ENCODE measurements at regions of chr15 and their contacts with region 1.

Region 1: GRCh38 chr15:44711356-44712107 is at the start of gene B2M:
- DNase-seq: peak; percentile 97 to 98
- ATAC-seq: peak; percentile 67 to 87 (median 75)
- H3K4me3 ChIP-seq: peak within 1 kb of the TSS; percentile 99
- H3K4me3 Mint-ChIP-seq: peak within 1 kb of the TSS; percentile 100
- H3K27ac ChIP-seq: peak within 1 kb of the TSS; percentile 95
- H3K27ac Mint-ChIP-seq: peak within 1 kb of the TSS; percentile 92 to 100
- H3K4me1 ChIP-seq: peaks cover 32% of the 10 kb centered on the region
- H3K4me1 Mint-ChIP-seq: peaks cover 77 to 78% of the 10 kb centered on the region in 2 donors
- H3K27me3 ChIP-seq: no peaks in the 10 kb centered on the region
- H3K27me3 Mint-ChIP-seq: no peaks in the 10 kb centered on the region
- CTCF ChIP-seq: no peak
- total RNA-seq, gene B2M: 7,484 to 8,893 (median 7,665) TPM

Region 2: DNA sequence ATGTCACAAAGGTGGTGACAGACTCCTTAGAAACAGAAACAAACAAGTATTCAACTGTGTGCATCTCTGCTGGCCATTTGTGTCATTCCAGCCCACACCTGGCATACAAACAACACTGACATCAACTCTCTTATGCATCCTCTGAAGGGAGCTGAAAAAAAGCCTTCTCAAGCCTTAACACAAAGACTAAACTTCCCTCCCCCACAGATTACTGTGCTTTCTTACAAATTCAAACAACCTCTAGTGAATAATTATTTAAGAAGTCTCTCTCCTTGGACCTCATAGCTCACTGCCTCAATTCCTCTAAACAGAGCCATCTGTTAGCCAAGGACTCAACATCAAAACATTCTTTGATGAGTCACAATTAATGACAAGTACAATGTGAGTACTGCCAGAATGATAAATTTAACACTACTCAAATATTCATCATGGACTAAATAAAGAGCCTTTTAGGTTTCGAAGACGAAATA is 752.6 kb before region 1 on chr15:
- intact Hi-C with region 1: no loop called
- DNase-seq: no peak
- ATAC-seq: no peak
- H3K4me3 ChIP-seq: no peak overlapping the region
- H3K4me3 Mint-ChIP-seq: no peak overlapping the region
- H3K27ac ChIP-seq: no peak overlapping the region
- H3K27ac Mint-ChIP-seq: no peak overlapping the region
- H3K4me1 ChIP-seq: no peaks in the 10 kb centered on the region
- H3K4me1 Mint-ChIP-seq: no peaks in the 10 kb centered on the region
- H3K27me3 ChIP-seq: peaks cover 2% of the 10 kb centered on the region
- H3K27me3 Mint-ChIP-seq: peaks cover 12 to 19% of the 10 kb centered on the region in 2 donors
- CTCF ChIP-seq: no peak

Region 3: GRCh38 chr15:44676676-44677075 is 34.9 kb before region 1 on chr15:
- intact Hi-C with region 1: loop called (anchors 1 kb)
- DNase-seq: peak; percentile 57 to 59
- ATAC-seq: peak; percentile 73 to 76 (median 74)
- H3K4me3 ChIP-seq: peak overlapping the region; percentile 33
- H3K4me3 Mint-ChIP-seq: peak overlapping the region; percentile 90
- H3K27ac ChIP-seq: peak overlapping the region; percentile 97
- H3K27ac Mint-ChIP-seq: peak overlapping the region; percentile 76 to 84
- H3K4me1 ChIP-seq: peaks cover 90% of the 10 kb centered on the region
- H3K4me1 Mint-ChIP-seq: peaks cover 76% of the 10 kb centered on the region in 2 donors
- H3K27me3 ChIP-seq: no peaks in the 10 kb centered on the region
- H3K27me3 Mint-ChIP-seq: no peaks in the 10 kb centered on the region
- CTCF ChIP-seq: no peak

Region 4: GRCh38 chr15:44682211-44682610 is 29.3 kb before region 1 on chr15:
- intact Hi-C with region 1: loop called (anchors 1 kb)
- DNase-seq: no peak
- ATAC-seq: no peak
- H3K4me3 ChIP-seq: no peak overlapping the region
- H3K4me3 Mint-ChIP-seq: peak overlapping the region; percentile 72
- H3K27ac ChIP-seq: peak overlapping the region; percentile 87
- H3K27ac Mint-ChIP-seq: peak overlapping the region; percentile 76 to 84
- H3K4me1 ChIP-seq: peaks cover 69% of the 10 kb centered on the region
- H3K4me1 Mint-ChIP-seq: peaks cover 86 to 87% of the 10 kb centered on the region in 2 donors
- H3K27me3 ChIP-seq: no peaks in the 10 kb centered on the region
- H3K27me3 Mint-ChIP-seq: no peaks in the 10 kb centered on the region
- CTCF ChIP-seq: no peak

Region 5: DNA sequence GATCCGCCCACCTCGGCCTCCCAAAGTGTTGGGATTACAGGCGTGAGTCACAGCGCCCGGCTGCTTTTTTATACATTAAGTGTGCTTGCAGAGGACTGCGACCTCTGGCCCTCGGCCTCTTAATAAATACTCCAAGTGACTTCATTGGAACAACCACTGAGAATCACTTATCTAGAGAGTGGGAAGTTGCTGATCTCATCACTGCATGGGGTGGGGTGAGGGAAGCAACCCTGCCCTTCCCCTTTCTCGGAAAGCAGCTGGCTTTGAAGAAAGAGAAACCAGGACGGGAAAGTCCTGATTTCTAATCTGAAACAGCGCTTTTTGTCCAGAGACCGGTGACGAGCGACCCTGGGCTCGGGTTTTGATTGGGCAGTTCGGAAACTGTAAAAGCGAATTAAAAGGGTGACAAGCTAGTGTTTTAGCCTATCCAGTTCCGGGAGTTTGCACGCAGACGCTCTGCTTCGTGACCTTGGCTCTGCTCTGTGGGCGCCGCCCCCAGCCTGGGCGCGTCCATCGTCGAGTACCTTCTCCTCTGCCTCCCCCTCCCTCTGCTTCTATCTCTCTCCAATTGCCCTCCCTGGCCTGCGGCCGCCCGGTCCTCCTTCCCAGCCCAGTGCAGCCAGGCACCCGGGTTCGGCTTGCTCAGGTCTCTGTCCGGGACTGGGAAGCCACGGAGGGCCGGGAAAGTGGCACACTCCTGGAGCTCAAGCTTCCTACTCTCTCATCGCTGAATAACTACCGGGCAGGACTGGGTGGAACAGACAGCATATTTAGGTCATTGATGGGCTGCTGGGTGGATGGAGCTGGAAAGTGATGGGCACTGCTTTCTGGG is 17.3 kb after region 1 on chr15:
- intact Hi-C with region 1: loop called (anchors 1 kb)
- DNase-seq: peak; percentile 94 to 98
- ATAC-seq: peak; percentile 75 to 92 (median 83)
- H3K4me3 ChIP-seq: peak overlapping the region; percentile 98
- H3K4me3 Mint-ChIP-seq: peak overlapping the region; percentile 98
- H3K27ac ChIP-seq: peak overlapping the region; percentile 96
- H3K27ac Mint-ChIP-seq: peak overlapping the region; percentile 100
- H3K4me1 ChIP-seq: peaks cover 53% of the 10 kb centered on the region
- H3K4me1 Mint-ChIP-seq: peaks cover 57 to 59% of the 10 kb centered on the region in 2 donors
- H3K27me3 ChIP-seq: no peaks in the 10 kb centered on the region
- H3K27me3 Mint-ChIP-seq: no peaks in the 10 kb centered on the region
- CTCF ChIP-seq: no peak

Region 6: GRCh38 chr15:44753345-44753744 is 41.8 kb after region 1 on chr15:
- intact Hi-C with region 1: no loop called
- DNase-seq: no peak
- ATAC-seq: no peak
- H3K4me3 ChIP-seq: no peak overlapping the region
- H3K4me3 Mint-ChIP-seq: no peak overlapping the region
- H3K27ac ChIP-seq: no peak overlapping the region
- H3K27ac Mint-ChIP-seq: no peak overlapping the region
- H3K4me1 ChIP-seq: no peaks in the 10 kb centered on the region
- H3K4me1 Mint-ChIP-seq: no peaks in the 10 kb centered on the region
- H3K27me3 ChIP-seq: no peaks in the 10 kb centered on the region
- H3K27me3 Mint-ChIP-seq: peaks cover 0 to 8% of the 10 kb centered on the region in 2 donors
- CTCF ChIP-seq: no peak

Region 7: DNA sequence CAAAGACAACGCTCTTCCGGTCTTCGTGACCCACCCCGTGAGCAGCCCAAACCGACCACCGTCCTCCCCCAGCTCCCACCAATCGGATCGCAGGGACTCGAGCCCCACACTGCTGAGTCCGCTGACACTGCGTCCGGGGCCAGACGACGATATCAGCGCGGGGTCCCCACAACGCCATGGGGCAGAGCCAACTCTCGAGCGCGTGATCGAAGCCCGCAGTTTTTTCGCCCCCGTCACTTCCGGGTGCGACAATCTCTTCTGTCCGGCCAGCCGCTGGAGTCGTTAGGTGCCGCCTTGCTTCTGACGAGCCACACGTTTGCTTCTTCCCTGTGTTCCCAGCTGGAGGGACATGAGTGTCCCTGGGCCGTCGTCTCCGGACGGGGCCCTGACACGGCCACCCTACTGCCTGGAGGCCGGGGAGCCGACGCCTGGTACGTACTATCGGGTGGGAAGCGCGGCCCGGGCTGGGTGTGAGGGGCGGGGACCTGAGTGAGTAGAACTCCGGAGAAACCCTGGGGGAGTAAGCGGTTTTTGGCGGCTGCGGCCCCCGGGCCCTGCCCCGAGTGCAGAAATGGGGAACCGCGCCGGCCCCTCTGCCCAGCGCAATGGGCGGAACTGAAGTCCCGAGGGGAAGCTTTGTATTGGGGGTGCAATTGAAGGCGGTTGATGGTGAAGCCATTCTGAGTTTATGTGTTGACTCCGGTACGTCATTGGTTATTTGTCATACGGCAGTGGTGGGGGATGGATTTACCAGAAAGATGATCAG is 875.7 kb after region 1 on chr15 and contains the start of gene BLOC1S6:
- intact Hi-C with region 1: loop called (anchors 10 kb)
- DNase-seq: peak; percentile 93 to 95
- ATAC-seq: peak; percentile 88 to 97 (median 93)
- H3K4me3 ChIP-seq: peak within 1 kb of the TSS; percentile 68
- H3K4me3 Mint-ChIP-seq: peak within 1 kb of the TSS; percentile 97
- H3K27ac ChIP-seq: peak within 1 kb of the TSS; percentile 94
- H3K27ac Mint-ChIP-seq: peak within 1 kb of the TSS; percentile 99 to 100
- H3K4me1 ChIP-seq: peaks cover 15% of the 10 kb centered on the region
- H3K4me1 Mint-ChIP-seq: peaks cover 39% of the 10 kb centered on the region in 2 donors
- H3K27me3 ChIP-seq: no peaks in the 10 kb centered on the region
- H3K27me3 Mint-ChIP-seq: peaks cover 0 to 4% of the 10 kb centered on the region in 2 donors
- CTCF ChIP-seq: no peak
- total RNA-seq, gene BLOC1S6: 63.4 to 81.3 (median 65.6) TPM

Measured in natural killer cell (primary cell).